Dorsolateral prefrontal cortex (tissue), 120 donors: ENCODE measurements at regions of chr17 and their contacts with region 1.

Region 1: DNA sequence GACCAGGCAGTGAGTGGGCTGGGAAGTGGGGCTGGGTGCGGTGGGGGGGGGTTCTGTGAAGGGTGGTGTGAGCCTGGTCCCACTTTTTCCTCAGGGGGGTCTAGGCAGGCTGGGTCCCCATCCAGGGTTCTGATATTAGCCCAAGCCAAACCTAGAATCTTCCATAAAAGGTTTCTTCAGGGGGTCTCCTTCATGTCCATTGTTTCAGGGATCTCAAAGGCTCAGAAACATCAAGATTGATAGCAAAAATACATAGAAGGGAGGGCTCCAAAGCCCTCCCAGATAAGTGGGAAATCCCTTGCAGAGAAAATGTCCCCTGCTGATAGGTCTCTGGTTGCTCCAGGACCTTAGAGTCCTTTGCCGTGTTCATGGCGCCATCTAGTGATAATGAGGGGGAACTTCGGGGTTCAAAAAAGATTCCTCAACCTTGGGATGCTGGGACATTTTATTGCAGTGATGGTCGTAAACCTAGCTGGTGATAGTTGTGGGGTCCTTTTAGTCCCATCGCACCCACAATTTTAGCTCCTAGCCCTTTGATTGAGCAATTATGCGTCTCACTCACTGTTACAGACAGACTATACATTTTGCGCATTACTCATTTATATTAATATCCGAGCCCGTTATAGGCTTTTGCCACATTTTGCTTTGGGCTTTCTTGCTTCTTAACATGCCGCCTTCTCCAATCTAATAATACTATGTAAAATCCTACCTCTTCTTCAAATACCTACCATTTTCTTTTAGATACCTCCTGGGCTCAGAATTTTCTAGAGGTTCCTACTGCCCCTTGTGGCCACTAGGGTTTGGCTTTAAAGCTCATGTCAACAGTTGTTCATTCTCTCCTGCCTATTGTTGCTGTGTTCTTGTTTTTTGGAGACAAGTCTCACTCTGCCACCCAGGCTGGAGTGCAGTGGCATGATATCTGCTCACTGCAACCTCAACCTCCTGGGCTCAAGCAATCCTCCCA is 35.1 kb downstream of the IGF2BP1 start:
- DNase-seq: peak in 2 of 10 donors; percentile 8 to 21
- H3K4me3 ChIP-seq: no peak overlapping the region
- H3K27ac ChIP-seq: no peak overlapping the region
- H3K27me3 ChIP-seq: peaks cover 0 to 24% (median 2%) of the 10 kb centered on the region in 45 donors
- CTCF ChIP-seq: peak; percentile 33 to 80 (median 66)

Region 2: DNA sequence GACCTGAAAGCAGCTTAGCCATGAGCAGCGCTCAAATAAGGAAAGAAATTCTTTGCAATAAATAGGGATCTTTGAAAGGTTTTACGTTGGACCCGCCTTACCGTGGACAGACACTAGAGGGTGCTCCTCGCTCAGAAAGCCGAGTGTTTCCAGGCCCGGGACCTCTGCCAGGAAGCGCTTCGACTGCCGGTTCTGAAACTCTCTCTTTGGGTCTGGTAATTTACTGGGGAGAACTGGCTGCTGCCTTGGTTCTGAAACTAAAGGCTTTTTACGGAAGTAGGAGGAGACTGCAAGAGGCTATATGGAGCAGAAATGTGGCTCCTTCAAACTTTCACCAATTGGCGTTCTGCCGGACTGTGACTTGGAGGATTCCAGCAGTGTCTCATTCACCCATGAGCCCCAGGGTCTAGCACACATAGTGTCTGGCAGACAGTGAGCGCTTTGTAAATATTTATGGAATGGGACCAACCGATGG is 360.5 kb before region 1 on chr17:
- intact Hi-C with region 1: loop called in 1 of 2 experiments (anchors 5 kb)
- DNase-seq: peak; percentile 71 to 87 (median 81)
- H3K4me3 ChIP-seq: peak overlapping the region in 50 of 59 donors; percentile 5 to 64 (median 34)
- H3K27ac ChIP-seq: peak overlapping the region in 1 of 59 donors; percentile 9
- H3K27me3 ChIP-seq: peaks cover 0 to 70% (median 32%) of the 10 kb centered on the region in 45 donors
- CTCF ChIP-seq: peak; percentile 63 to 97 (median 88)

Region 3: GRCh38 chr17:48804925-48805411 is 227.3 kb before region 1 on chr17:
- intact Hi-C with region 1: loop called in 1 of 2 experiments (anchors 5 kb)
- DNase-seq: peak in 9 of 10 donors; percentile 28 to 78 (median 64)
- H3K4me3 ChIP-seq: peak overlapping the region in 1 of 59 donors; percentile 1
- H3K27ac ChIP-seq: no peak overlapping the region
- H3K27me3 ChIP-seq: peaks cover 0 to 6% (median 0%) of the 10 kb centered on the region in 45 donors
- CTCF ChIP-seq: peak; percentile 58 to 96 (median 90)

Region 4: DNA sequence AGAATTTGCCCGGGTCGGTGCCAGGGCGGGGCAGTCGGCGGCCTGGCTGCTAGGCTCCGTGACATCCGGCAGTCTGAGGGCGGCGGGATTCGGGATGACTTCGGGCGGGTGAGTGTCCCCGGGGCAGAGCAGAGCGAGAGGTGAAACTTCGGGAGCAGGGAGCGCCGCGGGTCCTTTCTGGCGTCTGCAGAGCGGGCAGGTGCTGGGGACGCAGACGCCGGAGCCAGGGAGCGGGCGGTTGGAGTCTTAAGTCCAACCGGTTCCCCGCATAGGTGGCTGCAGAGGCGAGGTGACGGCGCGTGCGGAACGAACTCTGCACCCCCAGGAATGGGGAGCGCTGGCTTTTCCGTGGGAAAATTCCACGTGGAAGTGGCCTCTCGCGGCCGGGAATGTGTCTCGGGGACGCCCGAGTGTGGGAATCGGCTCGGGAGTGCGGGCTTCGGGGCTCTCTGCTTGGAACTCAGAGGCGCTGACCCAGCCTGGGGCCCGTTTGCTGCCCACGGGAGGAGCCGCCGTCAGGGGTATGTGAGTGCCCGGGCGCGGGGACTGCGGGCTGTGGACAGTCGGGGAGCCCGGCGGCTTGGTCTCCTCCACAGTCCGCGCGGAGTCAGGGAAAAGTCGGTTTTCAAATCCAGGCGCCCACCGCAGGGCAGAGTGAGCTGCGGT is 100.6 kb after region 1 on chr17 and contains the start of gene B4GALNT2:
- intact Hi-C with region 1: no loop called
- DNase-seq: no peak
- H3K4me3 ChIP-seq: peak within 1 kb of the TSS in 48 of 59 donors; percentile 2 to 62 (median 32)
- H3K27ac ChIP-seq: no peak within 1 kb of the TSS
- H3K27me3 ChIP-seq: peaks cover 0 to 74% (median 47%) of the 10 kb centered on the region in 45 donors
- CTCF ChIP-seq: no peak
- total RNA-seq, gene B4GALNT2: 0.03 to 0.23 (median 0.08) TPM in 63 of 120 experiments, not detected in the others